ENCODE measurements at regions of chr19 and their contacts with region 1.

Region 1: DNA sequence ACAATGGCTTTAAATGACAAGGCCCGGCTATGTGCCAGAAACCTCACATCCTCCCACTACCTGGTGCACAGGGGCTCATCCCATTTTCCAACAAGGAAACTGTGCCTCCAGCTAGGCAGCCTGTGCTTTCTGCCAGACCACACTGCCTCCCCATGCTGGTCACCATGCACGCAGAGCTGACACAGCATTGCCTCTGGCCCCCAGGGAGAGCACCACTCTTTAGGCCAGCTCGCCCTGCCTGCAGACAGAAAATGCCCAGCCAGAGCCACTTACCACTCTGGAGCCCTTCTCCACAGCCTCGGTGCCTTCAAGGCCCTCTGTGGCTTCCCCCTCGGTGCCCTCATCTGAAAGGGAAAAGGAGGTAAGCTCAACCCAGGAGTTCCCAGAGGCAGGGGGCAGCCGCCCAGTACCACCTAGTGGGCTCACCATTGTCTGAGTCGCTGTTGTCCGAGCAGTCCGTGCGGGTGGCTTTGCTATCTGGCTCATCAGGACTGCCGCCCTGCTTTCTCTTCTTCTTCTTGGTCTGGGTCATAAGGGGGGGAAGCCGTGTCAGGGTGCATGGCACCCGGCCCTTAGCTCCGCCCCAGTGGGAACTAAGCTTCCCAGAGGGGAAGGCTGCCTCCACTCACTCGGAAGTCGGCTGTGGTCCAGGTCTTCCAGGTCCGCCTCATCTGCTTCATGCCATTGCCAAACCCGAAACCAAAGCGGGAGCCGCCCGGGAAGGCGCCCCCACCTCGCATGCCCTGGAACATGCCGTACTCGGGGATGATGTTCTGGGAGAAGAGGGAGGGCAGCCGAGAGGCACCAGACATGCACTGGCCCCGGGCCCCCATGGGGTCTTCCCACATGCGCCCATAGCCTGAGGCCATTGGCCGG is 18.0 kb downstream of the AKAP8L start:
- DNase-seq: peak in 1 of 2 donors; percentile 82
- ATAC-seq: peak in 2 of 4 donors; percentile 15 to 37
- H3K4me3 ChIP-seq: no peak overlapping the region
- H3K27ac ChIP-seq: peak overlapping the region; percentile 77
- H3K4me1 ChIP-seq: peaks cover 63% of the 10 kb centered on the region
- H3K27me3 ChIP-seq: no peaks in the 10 kb centered on the region
- CTCF ChIP-seq: no peak

Region 2: DNA sequence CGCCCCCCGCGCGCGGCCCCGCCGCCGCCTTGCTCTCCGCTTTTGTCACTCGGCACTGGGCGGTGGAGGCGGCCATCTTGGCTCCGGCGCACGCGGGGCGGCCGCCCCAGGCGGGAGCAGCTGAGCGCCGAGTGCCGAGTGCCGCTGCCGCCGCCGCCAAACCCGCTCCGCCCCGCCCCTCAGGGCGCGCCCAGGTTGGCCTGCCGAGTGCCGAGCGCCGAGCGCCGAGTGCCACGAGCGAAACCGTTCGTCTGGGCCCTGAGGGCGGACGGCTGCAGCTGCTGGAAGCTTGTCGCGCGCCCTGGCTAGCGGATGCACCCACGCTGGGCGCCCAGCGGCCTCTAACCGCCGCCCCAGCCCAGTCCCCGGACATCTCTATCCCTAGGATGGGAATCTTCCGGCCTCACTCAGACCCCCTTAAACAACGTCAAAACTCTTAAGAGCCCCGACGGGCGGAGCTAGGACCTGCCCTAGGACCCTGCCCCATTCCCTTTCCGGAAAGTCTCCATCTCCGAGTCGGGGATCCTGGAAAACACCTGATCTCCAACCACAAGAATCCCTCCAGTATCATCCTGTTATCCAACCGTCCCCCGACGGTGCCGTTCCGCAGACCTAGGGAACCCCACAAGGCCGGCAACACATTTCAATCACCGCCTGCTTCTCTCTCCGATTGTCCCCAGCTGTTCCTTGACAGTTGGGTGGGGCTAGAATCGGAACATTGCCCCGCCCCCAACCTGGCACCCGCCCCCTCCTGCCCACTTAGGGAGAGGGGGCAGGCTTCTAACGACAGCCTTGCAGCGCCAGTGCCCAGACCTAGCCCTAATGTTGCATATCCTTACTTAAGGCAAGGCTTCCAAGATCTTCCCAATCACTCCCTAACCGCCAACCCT is 32.1 kb after region 1 on chr19:
- intact Hi-C with region 1: loop called in 1 of 2 experiments (anchors 2 kb)
- DNase-seq: peak; percentile 95 to 97
- ATAC-seq: peak; percentile 91 to 97 (median 92)
- H3K4me3 ChIP-seq: peak overlapping the region; percentile 83
- H3K27ac ChIP-seq: peak overlapping the region; percentile 96
- H3K4me1 ChIP-seq: peaks cover 25% of the 10 kb centered on the region
- H3K27me3 ChIP-seq: no peaks in the 10 kb centered on the region
- CTCF ChIP-seq: no peak